ENCODE measurements at regions of chr3 and their contacts with region 1.

Region 1: DNA sequence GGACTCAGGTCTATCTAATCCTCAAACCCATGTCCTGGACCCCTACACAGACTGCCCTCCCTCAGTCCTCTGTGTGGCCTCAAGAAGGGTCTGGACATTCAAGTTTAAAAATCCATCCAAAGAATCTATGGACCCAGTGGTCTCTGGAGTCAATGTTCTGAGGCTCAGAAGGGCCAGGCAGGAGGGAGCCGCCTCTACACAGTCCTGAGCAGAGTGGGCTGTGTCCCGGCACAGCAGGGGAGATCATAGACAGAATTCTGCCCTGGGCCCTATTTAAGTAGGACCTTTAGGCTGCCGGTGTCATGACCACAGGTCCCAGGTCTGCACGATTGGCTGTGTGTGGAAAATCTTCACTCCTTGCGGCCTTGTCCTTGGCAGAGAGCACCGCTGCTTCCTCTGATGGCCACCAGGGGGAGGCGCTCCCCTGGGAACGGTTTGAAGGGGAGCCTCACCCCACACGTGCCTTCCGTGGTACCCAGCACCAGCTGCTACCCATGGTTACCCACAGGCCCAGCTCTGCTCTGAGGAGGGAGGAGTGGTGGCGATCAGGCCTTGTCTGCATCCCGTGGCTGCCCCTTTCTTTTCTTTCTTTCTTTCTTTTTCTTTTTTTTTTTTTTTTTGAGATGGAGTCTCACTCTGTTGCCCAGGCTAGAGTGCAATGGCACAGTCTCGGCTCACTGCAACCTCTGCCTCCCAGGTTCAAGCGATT is 37.9 kb downstream of the CHRD start:
- DNase-seq: peak; percentile 48 to 72
- H3K4me3 ChIP-seq: no peak overlapping the region
- H3K27ac ChIP-seq: no peak overlapping the region
- H3K4me1 ChIP-seq: no peaks in the 10 kb centered on the region
- H3K27me3 ChIP-seq: no peaks in the 10 kb centered on the region
- CTCF ChIP-seq: peak; percentile 50 to 87 (median 84)
- POLR2A ChIP-seq: no peak

Region 2: GRCh38 chr3:184428561-184429175 is 10.9 kb after region 1 on chr3:
- intact Hi-C with region 1: no loop called
- DNase-seq: peak in 1 of 2 donors; percentile 68
- H3K4me3 ChIP-seq: no peak overlapping the region
- H3K27ac ChIP-seq: peak overlapping the region in 1 of 2 donors; percentile 54
- H3K4me1 ChIP-seq: no peaks in the 10 kb centered on the region
- H3K27me3 ChIP-seq: no peaks in the 10 kb centered on the region
- CTCF ChIP-seq: no peak
- POLR2A ChIP-seq: no peak

Region 3: DNA sequence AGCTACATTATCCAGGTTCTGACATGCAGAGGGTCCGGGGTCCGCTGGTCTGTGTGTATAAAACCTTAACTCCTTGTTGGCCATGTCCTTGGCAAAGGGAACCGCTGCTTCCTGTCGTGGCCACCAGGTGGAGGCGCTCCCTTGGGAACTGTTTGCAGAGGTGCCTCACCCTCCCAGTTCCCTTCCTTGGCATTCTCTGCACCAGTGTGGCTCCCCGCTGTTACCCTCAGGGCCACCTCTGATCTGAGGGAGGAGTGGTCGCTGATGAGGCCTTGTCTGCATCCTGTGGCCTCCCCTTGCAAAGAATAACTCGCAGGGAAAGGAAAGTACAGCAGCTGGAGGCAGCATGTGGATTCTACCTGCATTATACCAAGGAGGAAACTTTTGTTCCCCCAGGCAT is 51.6 kb after region 1 on chr3:
- intact Hi-C with region 1: no loop called
- DNase-seq: no peak
- H3K4me3 ChIP-seq: no peak overlapping the region
- H3K27ac ChIP-seq: no peak overlapping the region
- H3K4me1 ChIP-seq: no peaks in the 10 kb centered on the region
- H3K27me3 ChIP-seq: no peaks in the 10 kb centered on the region
- CTCF ChIP-seq: peak in 2 of 3 donors; percentile 36 to 45
- POLR2A ChIP-seq: no peak

Region 4: DNA sequence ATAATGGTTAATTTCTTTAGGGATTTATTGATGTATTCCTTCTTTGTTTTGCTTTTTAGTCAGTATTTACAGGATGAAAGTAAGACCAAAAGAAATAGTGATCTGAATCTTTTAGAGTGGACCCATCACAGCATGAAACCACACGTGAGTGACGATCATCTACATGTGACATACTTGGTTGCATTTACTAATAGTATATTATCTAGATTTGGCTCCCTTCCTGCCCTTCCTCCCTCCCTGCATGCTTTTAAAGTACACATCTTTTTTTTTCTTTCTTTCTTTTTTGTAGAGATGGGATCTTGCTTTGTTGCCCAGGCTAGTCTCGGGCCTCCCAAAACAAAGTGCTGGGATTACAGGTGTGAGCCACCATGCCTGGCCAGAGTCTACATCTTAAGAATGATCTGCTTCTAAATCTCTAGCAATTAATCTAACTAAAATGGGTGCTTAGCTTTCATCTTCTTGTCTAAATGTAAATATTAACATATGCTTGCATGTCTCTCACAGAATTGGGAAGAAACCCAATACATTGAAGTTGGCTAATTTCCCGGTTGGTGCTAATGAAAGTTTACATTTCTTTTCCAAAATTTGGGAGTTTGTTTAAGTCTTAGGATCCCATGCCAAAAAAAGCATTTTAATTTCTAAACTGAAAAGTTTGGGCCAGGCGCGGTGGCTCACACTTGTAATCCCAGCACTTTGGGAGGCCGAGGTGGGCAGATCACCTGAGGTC is 1206.3 kb after region 1 on chr3:
- intact Hi-C with region 1: loop called (anchors 5 kb)
- DNase-seq: no peak
- H3K4me3 ChIP-seq: no peak overlapping the region
- H3K27ac ChIP-seq: no peak overlapping the region
- H3K4me1 ChIP-seq: no peaks in the 10 kb centered on the region
- H3K27me3 ChIP-seq: no peaks in the 10 kb centered on the region
- CTCF ChIP-seq: no peak
- POLR2A ChIP-seq: no peak

Measured in breast epithelium (tissue), 4 donors.